PC-9 (cell line): ENCODE measurements at regions of chr3 and their contacts with region 1.

Region 1: DNA sequence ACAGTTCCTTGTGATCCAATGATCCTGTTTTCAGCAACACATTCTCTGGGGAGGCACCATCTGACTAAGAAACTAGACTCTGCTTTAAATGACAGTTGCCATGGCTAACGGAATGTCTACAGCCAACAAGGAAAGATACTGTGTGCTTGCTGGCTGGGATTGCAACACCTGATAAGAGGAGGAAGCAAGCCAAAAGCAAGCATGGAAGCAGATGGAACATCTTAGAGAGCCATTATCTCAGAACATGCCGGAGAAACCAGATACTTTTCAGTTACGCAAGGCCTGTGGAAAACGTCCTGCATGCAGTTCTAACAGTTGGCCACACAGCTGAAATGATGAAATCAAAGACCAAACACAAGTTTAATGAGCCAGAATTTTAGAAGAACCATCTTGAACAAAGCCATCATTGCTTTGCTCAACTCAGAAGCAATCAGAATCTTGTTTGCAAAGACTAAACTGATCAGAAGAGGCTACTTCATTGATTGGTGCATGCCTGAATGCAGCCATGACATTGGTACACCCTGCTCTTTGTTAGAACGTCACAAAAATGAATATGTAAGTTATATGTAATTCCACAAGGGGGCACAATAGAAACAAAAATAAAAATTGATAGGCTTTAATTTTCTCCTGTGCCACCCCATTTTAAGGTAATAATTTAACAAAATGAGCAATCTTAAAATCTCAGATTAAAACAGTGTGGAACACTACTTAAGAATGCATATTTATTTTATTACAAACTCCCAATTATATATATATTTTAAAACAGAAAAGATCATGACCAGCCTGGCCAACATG is 50.8 kb downstream of the GXYLT2 start:
- DNase-seq: peak; percentile 29 to 70
- H3K4me3 ChIP-seq: peak overlapping the region; percentile 24; the same call in 1 of the 2 replicates
- H3K27ac ChIP-seq: no peak overlapping the region
- H3K4me1 ChIP-seq: peaks cover 7% of the 10 kb centered on the region; the same call in 1 of the 2 replicates
- H3K27me3 ChIP-seq: no peaks in the 10 kb centered on the region
- CTCF ChIP-seq: peak; percentile 81

Region 2: GRCh38 chr3:72985576-72985975 is 46.9 kb after region 1 on chr3:
- CTCF ChIA-PET with region 1: no interaction called
- POLR2A ChIA-PET with region 1: no interaction called
- intact Hi-C with region 1: no loop called
- DNase-seq: no peak
- H3K4me3 ChIP-seq: no peak overlapping the region
- H3K27ac ChIP-seq: no peak overlapping the region
- H3K4me1 ChIP-seq: no peaks in the 10 kb centered on the region
- H3K27me3 ChIP-seq: no peaks in the 10 kb centered on the region
- CTCF ChIP-seq: no peak

Region 3: DNA sequence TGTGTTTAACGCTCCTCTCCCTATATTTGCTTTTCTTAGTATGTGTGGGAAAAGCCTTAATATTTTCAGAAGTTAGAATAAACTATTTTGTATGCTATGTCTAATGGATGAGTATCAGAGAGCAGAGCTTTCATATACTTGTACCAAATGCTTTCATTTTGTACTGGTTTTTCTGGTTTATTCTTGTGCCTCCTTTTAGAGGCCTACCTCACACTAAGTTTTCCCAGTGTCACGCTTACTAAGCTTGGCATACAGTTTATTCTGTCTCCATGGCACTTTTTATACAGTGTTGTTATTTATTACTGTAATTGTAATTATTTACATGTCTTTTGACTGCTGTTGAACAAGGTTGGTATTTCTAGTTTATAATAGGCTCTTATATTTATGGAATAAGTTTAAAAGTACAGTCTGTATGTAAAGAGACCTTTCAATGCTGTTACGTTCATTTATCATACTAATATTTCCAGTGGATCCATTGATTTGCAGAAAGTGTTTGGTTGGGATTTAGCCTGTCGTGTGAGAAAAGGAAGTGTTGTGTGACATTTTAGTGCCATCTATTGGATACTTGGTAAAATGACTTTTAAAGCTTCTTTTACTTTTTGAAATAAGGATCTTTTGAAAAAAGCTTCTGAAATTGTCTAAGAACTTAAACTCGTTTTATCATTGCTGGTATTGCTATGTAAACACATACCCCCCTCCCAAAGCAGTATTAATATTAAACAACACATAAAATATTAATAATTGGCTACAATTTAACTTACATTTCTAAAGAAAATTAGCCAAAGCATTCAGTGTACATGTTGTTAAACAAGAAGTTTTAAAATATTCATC is 117.6 kb after region 1 on chr3:
- CTCF ChIA-PET with region 1: interaction called, 4 read pairs
- POLR2A ChIA-PET with region 1: no interaction called
- intact Hi-C with region 1: loop called (anchors 1 kb)
- DNase-seq: peak in 1 of 2 experiments; percentile 46
- H3K4me3 ChIP-seq: no peak overlapping the region
- H3K27ac ChIP-seq: peak overlapping the region; percentile 29; the same call in 1 of the 2 replicates
- H3K4me1 ChIP-seq: no peaks in the 10 kb centered on the region
- H3K27me3 ChIP-seq: no peaks in the 10 kb centered on the region
- CTCF ChIP-seq: peak; percentile 61

Region 4: DNA sequence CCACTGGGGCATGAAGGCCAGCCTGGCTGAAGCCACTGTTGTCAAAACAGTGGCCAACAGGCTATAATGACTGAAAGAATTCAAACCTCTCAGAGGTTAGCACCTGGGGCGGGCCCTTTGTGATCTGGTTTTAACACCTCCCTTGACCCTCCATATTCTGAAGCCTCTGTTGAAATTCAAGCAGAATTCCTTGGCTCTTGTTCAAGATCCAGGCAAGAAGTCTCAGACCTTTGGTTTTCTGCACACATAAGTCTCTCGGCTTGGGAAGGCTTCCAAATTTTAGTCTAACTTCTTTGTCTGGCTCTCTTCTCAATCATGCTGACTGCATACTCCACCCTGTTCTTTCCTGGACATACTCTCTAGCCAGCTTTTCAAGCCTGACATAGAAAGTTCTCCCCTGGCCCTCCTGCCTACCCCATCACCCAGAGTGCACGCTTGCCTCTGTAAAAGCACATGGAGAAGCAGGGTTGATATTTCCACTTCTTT is 541.6 kb after region 1 on chr3:
- CTCF ChIA-PET with region 1: no interaction called
- POLR2A ChIA-PET with region 1: no interaction called
- intact Hi-C with region 1: no loop called
- DNase-seq: no peak
- H3K4me3 ChIP-seq: no peak overlapping the region
- H3K27ac ChIP-seq: no peak overlapping the region
- H3K4me1 ChIP-seq: no peaks in the 10 kb centered on the region
- H3K27me3 ChIP-seq: peaks cover 15% of the 10 kb centered on the region; the same call in 1 of the 2 replicates
- CTCF ChIP-seq: no peak